MCF 10A (cell line): ENCODE measurements at regions of chr11 and their contacts with region 1.

Region 1: DNA sequence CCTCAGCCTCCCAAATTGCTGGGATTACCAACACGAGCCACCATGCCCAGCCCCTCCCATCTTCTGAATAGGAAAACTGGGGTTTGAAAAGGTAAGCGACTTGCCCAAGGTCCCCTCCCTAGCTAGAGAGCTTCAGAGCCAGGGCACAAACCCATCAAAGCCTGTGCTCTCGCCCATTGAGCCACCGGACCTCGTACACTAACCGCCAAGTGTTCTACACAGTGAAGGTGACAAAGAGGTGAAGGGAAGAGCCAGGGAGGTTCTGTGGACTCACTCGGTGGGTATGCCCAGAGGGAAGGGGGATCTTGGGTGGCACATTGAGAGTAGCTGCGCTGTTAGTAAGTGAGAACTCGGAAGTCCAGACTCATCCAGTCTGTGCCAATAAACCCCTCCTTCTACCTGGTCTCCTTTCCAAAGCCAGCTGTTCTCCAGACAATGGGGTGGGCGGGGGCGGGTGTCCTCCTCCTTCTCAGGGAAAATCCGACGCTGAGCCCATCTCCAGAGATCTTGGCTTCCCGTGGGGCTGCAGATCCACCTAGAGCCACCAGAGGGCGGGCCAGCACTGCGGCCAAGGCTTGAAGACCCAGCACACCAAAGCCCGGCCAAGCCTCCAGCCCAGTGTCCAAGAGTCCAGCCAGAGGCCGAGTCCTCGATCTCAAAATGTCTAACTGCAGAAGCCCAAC is 3.2 kb upstream of the RTN4RL2 start:
- DNase-seq: peak; percentile 82
- H3K4me3 Mint-ChIP-seq: peak overlapping the region; percentile 39
- H3K27ac Mint-ChIP-seq: no peak overlapping the region
- H3K4me1 Mint-ChIP-seq: peaks cover 27% of the 10 kb centered on the region
- H3K27me3 Mint-ChIP-seq: peaks cover 34% of the 10 kb centered on the region
- CTCF ChIP-seq: peak; percentile 98

Region 2: DNA sequence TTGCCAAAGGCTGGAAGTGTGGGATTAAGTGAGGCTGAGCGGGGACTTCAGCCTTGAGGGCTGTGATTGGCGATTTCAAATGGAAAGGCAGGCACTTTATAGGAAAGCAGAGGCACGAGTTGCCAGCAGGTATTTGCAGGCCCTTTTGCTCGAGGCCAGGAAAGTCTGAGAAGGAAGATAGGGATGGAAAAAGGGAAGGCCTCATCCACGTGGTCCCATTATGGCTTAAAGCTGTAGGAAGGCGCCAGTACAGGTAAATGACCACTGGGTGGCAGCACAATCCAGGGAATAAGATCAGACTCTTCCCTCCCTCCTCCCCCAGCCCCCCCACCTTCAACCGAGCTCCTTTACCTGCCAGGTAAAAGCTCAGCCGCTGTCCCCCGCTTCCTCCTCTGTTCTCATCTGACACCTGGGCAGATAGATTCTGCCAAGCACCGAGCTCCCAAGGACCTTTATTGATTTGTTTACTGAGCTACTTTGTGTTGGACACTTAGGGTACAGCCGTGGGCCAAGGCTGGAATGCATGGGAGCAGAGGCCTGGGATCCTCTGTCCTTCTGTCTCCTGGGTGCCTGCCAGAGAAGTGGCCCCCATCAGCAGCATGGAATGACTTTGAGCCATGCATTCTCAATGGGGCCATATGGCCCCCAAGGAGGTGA is 111.4 kb before region 1 on chr11:
- CTCF ChIA-PET with region 1: interaction called, 32 read pairs
- POLR2A ChIA-PET with region 1: no interaction called
- intact Hi-C with region 1: loop called (anchors 1 kb)
- DNase-seq: peak; percentile 85
- H3K4me3 Mint-ChIP-seq: no peak overlapping the region
- H3K27ac Mint-ChIP-seq: no peak overlapping the region
- H3K4me1 Mint-ChIP-seq: no peaks in the 10 kb centered on the region
- H3K27me3 Mint-ChIP-seq: no peaks in the 10 kb centered on the region
- CTCF ChIP-seq: peak; percentile 90

Region 3: GRCh38 chr11:57444362-57445121 is 12.6 kb before region 1 on chr11:
- CTCF ChIA-PET with region 1: interaction called, 58 read pairs
- POLR2A ChIA-PET with region 1: no interaction called
- intact Hi-C with region 1: no loop called
- DNase-seq: no peak
- H3K4me3 Mint-ChIP-seq: no peak overlapping the region
- H3K27ac Mint-ChIP-seq: no peak overlapping the region
- H3K4me1 Mint-ChIP-seq: no peaks in the 10 kb centered on the region
- H3K27me3 Mint-ChIP-seq: peaks cover 10% of the 10 kb centered on the region
- CTCF ChIP-seq: no peak

Region 4: GRCh38 chr11:57480409-57481137 is 23.5 kb after region 1 on chr11:
- CTCF ChIA-PET with region 1: interaction called, 50 read pairs
- POLR2A ChIA-PET with region 1: interaction called, 3 read pairs
- intact Hi-C with region 1: loop called (anchors 2 kb)
- DNase-seq: peak; percentile 68
- H3K4me3 Mint-ChIP-seq: no peak overlapping the region
- H3K27ac Mint-ChIP-seq: no peak overlapping the region
- H3K4me1 Mint-ChIP-seq: peaks cover 2% of the 10 kb centered on the region
- H3K27me3 Mint-ChIP-seq: peaks cover 24% of the 10 kb centered on the region
- CTCF ChIP-seq: peak; percentile 72

Region 5: GRCh38 chr11:57515332-57516060 is 58.4 kb after region 1 on chr11 and contains the start of gene SLC43A1:
- CTCF ChIA-PET with region 1: interaction called, 55 read pairs
- POLR2A ChIA-PET with region 1: interaction called, 5 read pairs
- intact Hi-C with region 1: no loop called
- DNase-seq: peak; percentile 42
- H3K4me3 Mint-ChIP-seq: peak within 1 kb of the TSS; percentile 83
- H3K27ac Mint-ChIP-seq: peak within 1 kb of the TSS; percentile 21
- H3K4me1 Mint-ChIP-seq: no peaks in the 10 kb centered on the region
- H3K27me3 Mint-ChIP-seq: no peaks in the 10 kb centered on the region
- CTCF ChIP-seq: no peak
- total RNA-seq, gene SLC43A1: 1.7 and 3.2 TPM in 2 replicates

Region 6: DNA sequence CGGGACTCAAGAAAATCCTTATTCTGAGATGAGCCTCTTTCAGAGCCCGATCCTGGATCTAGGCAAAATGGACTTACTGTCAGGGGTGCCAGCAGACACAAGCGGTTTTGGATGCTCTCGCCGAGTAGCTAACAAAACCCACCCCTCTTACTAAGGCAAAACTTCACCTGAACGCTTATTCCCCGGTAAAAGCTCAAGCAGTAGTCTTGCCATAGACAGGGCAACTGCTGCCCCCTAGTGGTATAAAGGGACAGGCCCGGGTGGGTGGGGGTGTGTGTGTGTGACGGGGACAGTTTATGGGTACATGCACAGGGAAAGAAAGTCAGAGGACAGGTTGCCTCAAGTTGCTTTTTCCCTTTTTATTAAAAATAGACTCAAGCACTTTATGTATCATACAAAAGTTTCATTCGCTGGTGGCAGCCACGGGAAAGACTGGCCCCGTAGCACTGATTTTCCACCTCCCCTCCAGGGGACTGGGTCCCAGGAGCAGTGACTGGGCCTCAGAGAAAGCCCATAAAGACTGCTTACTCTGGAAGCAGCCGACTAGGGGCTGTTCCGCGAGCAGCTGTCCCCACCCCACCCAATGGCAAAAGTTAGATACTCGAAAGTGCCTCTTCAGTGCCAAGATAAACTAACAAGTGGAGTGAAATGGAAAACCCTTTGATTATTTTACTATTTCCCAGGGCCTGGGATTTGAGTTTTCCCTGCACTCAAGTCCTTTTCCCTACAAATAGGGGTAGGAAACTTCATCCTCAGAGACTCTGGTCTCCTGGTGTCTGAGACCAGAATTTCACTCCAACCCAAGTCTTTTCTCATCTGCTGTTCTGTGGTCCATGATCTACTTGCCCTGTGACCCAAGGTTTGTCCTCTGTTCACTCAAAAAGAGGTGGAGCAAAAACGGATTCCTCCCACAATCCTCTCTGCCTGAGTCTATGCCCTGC is 187.9 kb after region 1 on chr11:
- CTCF ChIA-PET with region 1: interaction called, 198 read pairs
- POLR2A ChIA-PET with region 1: interaction called, 3 read pairs
- intact Hi-C with region 1: loop called (anchors 1 kb)
- DNase-seq: peak; percentile 83
- H3K4me3 Mint-ChIP-seq: no peak overlapping the region
- H3K27ac Mint-ChIP-seq: no peak overlapping the region
- H3K4me1 Mint-ChIP-seq: peaks cover 28% of the 10 kb centered on the region
- H3K27me3 Mint-ChIP-seq: peaks cover 35% of the 10 kb centered on the region
- CTCF ChIP-seq: peak; percentile 59